HEK293 (cell line): ENCODE measurements at regions of chr14 and their contacts with region 1.

Region 1: DNA sequence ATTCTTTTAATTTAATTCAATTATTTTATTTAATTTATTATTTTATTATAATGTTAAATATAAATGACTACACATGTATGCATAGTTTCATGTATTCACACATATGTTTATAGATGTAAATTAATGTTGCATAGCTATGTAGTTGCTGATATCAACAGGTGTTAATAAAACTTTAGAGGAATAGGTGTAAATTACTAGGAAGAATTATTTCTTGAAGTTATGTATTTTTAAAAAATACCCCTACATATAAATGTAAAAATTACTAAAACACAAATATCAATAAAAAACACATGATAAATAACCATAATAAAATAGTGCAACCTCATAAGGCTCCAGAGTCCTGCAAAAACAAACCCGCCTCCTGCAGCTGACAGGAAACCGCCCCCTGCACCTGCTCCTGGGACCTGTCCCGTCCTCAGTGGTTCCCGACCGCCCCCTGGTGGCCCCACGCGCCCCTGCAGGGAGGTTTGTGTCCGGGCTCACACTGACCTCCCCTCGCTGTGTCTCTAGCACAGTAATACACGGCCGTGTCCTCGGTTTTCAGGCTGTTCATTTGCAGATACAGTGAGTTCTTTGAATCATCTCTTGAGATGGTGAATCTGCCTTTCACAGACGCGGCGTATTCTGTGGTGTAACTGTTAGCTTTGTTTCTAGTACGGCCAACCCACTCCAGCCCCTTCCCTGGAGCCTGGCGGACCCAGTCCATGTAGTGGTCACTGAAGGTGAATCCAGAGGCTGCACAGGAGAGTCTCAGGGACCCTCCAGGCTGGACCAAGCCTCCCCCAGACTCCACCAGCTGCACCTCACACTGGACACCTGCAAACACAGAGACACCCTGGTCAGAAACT is 1264.0 kb downstream of the TMEM121 start:
- H3K4me3 ChIP-seq: no peak overlapping the region
- H3K27ac ChIP-seq: no peak overlapping the region
- H3K4me1 ChIP-seq: no peaks in the 10 kb centered on the region
- CTCF ChIP-seq: peak; percentile 79

Region 2: DNA sequence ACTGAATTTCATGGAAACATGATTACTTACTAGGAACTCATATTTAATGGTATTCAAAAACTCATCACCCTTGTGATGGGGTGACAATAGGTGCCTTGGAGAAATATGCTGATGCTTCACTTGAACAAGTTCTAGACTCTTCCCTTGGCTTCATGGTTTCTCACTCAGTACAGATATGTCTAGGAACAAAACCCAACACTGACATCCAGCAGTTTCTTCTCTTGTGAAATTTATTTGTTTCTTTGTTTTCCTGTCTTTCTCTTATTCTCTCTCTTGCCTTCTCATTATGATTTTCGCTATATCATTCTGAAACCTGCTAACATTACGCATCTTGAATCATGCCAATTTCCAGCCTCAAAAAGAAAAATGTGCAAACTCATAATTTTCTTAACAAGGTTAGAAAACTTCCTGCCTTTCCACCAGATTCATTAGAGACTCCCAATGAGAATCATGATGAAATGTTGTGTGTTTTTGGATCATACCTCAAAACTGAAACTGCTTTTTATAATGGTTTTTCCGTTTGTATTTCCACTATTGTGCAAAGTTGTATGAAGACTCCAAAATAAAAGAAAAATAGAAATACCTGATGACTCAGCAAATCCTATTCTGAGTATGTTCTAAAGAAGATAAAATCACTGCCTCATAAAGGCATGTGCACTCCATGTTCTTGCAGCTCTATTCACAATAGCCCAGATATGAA is 242.5 kb before region 1 on chr14:
- CTCF ChIA-PET with region 1: no interaction called
- POLR2A ChIA-PET with region 1: no interaction called
- H3K4me3 ChIP-seq: no peak overlapping the region
- H3K27ac ChIP-seq: no peak overlapping the region
- H3K4me1 ChIP-seq: no peaks in the 10 kb centered on the region
- CTCF ChIP-seq: no peak

Region 3: DNA sequence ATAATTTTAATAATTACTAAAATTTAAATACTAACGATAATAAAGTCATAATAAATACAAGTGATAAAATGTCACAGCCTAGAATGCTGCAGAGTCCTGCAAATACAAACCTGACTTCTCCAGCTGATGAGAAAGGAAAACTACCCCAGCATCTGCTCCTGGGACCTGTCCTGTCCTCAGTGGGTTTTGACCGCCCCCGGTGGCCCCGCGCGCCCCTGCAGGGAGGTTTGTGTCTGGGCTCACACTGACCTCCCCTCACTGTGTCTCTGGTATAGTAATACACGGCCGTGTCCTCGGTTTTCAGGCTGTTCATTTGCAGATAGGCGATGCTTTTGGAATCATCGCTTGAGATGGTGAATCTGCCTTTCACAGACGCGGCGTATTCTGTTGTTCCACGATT is 124.6 kb before region 1 on chr14:
- CTCF ChIA-PET with region 1: interaction called, 17 read pairs
- POLR2A ChIA-PET with region 1: no interaction called
- H3K4me3 ChIP-seq: no peak overlapping the region
- H3K27ac ChIP-seq: no peak overlapping the region
- H3K4me1 ChIP-seq: no peaks in the 10 kb centered on the region
- CTCF ChIP-seq: no peak

Region 4: GRCh38 chr14:106729551-106729950 is 60.9 kb before region 1 on chr14:
- CTCF ChIA-PET with region 1: no interaction called
- POLR2A ChIA-PET with region 1: no interaction called
- H3K4me3 ChIP-seq: no peak overlapping the region
- H3K27ac ChIP-seq: no peak overlapping the region
- H3K4me1 ChIP-seq: no peaks in the 10 kb centered on the region
- CTCF ChIP-seq: no peak

Region 5: DNA sequence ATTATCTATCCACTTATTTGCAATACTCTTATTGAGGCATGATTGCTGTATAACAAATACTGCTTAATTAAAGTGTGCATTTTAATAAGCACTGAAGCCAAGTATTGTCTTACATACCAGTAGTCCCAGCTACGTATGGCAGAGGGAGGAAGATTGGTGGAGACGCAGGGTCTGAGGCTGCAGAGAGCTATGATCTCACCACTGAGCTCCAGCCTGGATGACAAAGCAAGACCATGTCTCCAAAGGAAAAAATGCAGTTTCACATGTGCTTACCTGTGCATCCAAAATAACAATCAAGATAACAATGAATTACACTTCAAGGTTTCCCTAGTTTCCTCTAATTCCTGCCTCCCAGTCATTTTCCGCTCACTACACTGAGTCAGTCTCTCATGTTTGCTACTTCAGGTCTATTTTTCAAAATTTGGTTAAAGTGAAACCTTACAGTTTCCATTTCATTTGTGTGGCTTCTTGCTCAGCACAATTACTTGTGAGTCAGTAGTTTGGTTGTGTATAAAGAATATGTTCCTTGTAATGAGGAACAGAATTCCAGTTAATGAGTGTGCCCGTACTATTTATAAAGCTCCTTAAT is 13.9 kb before region 1 on chr14:
- CTCF ChIA-PET with region 1: interaction called, 24 read pairs
- POLR2A ChIA-PET with region 1: no interaction called
- H3K4me3 ChIP-seq: no peak overlapping the region
- H3K27ac ChIP-seq: no peak overlapping the region
- H3K4me1 ChIP-seq: no peaks in the 10 kb centered on the region
- CTCF ChIP-seq: no peak

Region 6: DNA sequence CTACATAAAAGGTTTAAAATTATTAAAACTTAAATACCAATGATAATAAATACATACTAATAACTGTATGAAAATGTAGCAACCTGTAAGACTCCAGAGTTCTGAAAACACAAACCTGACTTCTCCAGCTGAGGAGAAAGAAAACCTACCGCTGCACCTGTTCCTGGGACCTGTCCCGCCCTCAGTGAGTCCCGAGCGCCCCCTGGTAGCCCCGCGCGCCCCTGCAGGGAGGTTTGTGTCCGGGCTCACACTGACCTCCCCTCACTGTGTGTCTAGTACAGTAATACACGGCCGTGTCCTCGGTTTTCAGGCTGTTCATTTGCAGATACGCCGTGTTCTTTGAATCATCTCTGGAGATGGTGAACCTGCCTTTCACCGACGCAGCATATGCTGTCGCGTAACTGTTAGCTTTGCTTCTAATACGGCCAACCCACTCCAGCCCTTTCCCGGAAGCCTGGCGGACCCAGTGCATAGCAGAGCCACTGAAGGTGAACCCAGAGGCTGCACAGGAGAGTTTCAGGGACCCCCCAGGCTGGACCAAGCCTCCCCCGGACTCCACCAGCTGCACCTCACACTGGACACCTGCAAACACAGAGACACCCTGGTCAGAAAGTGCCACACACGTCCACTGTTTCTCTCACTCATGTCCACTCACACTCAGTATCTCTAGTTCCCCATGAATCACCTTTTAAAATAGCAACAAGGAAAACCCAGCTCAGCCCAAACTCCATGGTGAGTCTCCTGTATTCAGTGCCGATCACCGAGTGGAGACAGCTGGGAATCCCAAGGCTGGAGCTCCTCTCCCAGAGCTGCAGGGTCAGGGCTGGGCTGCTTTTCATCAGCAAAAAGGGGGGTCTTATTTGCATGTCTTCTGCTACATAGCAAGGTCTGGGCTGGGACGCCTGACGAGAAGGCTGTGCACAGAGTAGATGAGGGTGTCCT is 12.3 kb after region 1 on chr14:
- CTCF ChIA-PET with region 1: interaction called, 50 read pairs
- POLR2A ChIA-PET with region 1: no interaction called
- H3K4me3 ChIP-seq: no peak overlapping the region
- H3K27ac ChIP-seq: no peak overlapping the region
- H3K4me1 ChIP-seq: no peaks in the 10 kb centered on the region
- CTCF ChIP-seq: peak; percentile 27; the same call in 1 of the 2 replicates

Region 7: GRCh38 chr14:106831322-106831720 is 40.9 kb after region 1 on chr14:
- CTCF ChIA-PET with region 1: interaction called, 13 read pairs
- POLR2A ChIA-PET with region 1: no interaction called
- H3K4me3 ChIP-seq: no peak overlapping the region
- H3K27ac ChIP-seq: no peak overlapping the region
- H3K4me1 ChIP-seq: no peaks in the 10 kb centered on the region
- CTCF ChIP-seq: peak; percentile 80

Region 8: DNA sequence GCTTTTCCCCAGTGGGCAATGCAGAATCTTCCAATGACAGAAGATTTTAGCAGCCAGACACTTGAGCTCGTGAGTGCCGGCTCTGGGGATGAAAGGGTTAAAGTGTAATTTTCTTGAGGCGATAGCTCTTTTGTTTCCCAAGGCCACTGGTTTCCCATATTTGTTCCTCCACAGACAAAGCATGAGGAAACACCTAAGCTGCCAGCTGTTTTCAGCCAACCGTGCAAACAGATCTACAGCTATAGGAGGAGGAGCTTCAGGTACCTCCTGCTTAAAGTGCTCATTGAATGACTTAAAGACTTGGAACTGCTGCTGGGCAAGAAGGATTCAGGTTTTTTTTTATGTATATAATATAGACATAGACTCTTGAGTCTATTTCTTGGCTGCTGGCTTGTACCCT is 47.5 kb after region 1 on chr14:
- CTCF ChIA-PET with region 1: interaction called, 11 read pairs
- POLR2A ChIA-PET with region 1: no interaction called
- H3K4me3 ChIP-seq: no peak overlapping the region
- H3K27ac ChIP-seq: no peak overlapping the region
- H3K4me1 ChIP-seq: no peaks in the 10 kb centered on the region; the same call in 1 of the 2 replicates
- CTCF ChIP-seq: no peak